ENCODE measurements at regions of chr20 and their contacts with region 1.

Region 1: DNA sequence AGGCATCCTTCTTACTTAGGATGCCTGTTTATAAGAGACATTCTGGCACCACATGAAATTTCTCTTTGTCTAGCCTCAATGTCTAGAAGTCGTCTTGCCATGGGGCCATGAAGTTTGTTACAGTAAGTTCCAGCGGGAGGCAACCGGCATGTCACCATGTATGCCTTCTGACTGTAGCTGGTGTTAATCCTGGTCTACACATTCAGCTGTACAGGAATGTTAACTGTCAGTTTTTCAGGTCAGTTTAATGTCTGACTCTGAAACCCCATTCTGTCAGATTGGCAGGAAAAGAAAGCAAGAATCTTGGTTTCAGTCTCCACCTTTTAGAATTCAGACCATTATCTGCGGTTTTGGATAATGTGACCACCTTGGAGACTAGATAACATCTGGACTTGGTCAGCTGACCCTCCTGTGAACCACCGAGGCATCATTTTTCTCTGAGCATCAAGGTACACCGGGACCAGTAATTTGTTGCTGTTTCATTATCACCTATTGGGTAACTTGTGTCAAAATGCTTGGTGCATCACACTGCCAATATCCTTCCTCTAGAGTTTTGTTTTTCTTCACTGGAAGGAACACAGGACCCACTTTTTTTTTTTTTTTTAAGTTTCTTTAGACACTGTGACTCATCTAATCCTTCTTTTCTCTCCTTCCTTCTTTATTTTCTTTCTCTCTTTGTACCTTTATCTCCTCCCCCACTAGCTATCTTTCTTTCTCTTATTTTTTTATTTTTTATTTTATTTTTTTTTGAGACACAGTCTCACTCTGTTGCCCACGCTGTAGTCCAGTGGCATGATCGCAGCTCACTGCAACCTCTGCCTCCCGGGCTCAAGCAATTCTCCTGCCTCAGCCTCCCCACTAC is 228.9 kb downstream of the DOK5 start:
- DNase-seq: no peak
- ATAC-seq: no peak
- H3K4me3 ChIP-seq: no peak overlapping the region
- H3K27ac ChIP-seq: no peak overlapping the region
- H3K4me1 ChIP-seq: no peaks in the 10 kb centered on the region
- H3K27me3 ChIP-seq: no peaks in the 10 kb centered on the region
- CTCF ChIP-seq: no peak
- EP300 ChIP-seq: no peak
- POLR2A ChIP-seq: no peak
- RAD21 ChIP-seq: no peak

Region 2: DNA sequence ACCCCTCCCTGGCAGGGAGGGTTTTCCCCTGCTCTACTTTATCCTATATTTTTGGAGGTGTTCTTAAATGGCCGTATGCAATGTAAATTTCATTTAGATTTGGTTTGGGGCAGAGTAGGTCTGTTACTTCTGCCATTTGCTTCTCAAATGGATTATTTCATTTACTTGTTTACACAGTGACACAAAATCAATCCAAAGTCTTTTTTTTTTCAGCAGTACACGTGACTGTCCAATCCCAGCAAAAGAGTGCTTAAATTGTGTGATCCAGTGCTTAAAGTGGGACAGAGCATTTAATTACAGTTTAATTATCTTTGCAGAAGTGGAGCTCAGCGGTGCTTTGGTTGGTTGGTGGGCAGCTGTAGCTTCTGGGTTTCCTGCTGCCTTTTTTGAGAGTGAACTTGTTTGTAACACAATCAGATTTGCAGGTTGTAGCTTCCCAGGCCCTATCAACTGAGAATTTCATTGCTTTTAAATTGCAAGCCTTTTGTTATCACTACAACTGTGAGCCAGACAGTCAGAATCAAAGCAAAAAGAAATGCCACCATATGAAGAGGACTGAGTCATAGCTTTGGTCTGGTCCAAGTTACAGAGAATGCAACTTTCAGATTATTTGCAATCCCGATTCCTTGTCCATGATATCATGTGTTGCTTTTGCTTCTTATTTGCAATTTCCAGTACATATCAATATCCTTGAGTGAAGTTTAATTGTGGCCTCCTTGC is 11.9 kb before region 1 on chr20:
- CTCF ChIA-PET with region 1: no interaction called
- POLR2A ChIA-PET with region 1: no interaction called
- RAD21 ChIA-PET with region 1: no interaction called
- SMC1A ChIA-PET with region 1: no interaction called
- in situ Hi-C with region 1: no loop called
- intact Hi-C with region 1: loop called (anchors 1 kb)
- DNase-seq: no peak
- ATAC-seq: no peak
- H3K4me3 ChIP-seq: no peak overlapping the region
- H3K27ac ChIP-seq: no peak overlapping the region
- H3K4me1 ChIP-seq: no peaks in the 10 kb centered on the region
- H3K27me3 ChIP-seq: no peaks in the 10 kb centered on the region
- CTCF ChIP-seq: no peak
- EP300 ChIP-seq: no peak
- POLR2A ChIP-seq: no peak
- RAD21 ChIP-seq: no peak